Adrenal gland (tissue), 19 donors: ENCODE measurements at regions of chr1 and their contacts with region 1.

Region 1: GRCh38 chr1:165914136-165914798 is 86.9 kb downstream of the UCK2 start:
- DNase-seq: peak; percentile 60 to 90 (median 69)
- H3K4me3 ChIP-seq: no peak overlapping the region
- H3K27ac ChIP-seq: no peak overlapping the region
- H3K4me1 ChIP-seq: no peaks in the 10 kb centered on the region
- H3K27me3 ChIP-seq: no peaks in the 10 kb centered on the region
- CTCF ChIP-seq: peak; percentile 72 to 96 (median 94)
- POLR2A ChIP-seq: no peak

Region 2: GRCh38 chr1:165392634-165393571 is 521.4 kb before region 1 on chr1:
- intact Hi-C with region 1: loop called (anchors 10 kb)
- DNase-seq: peak; percentile 75 to 86 (median 76)
- H3K4me3 ChIP-seq: no peak overlapping the region
- H3K27ac ChIP-seq: no peak overlapping the region
- H3K4me1 ChIP-seq: peaks cover 0 to 5% of the 10 kb centered on the region in 2 donors
- H3K27me3 ChIP-seq: peaks cover 11% of the 10 kb centered on the region
- CTCF ChIP-seq: peak; percentile 81 to 96 (median 91)
- POLR2A ChIP-seq: no peak

Region 3: GRCh38 chr1:165717918-165718515 is 196.2 kb before region 1 on chr1:
- intact Hi-C with region 1: loop called (anchors 2 to 5 kb)
- DNase-seq: peak; percentile 36 to 68 (median 51)
- H3K4me3 ChIP-seq: no peak overlapping the region
- H3K27ac ChIP-seq: no peak overlapping the region
- H3K4me1 ChIP-seq: no peaks in the 10 kb centered on the region
- H3K27me3 ChIP-seq: no peaks in the 10 kb centered on the region
- CTCF ChIP-seq: peak; percentile 36 to 79 (median 64)
- POLR2A ChIP-seq: no peak

Region 4: GRCh38 chr1:165827268-165828102 is 86.8 kb before region 1 on chr1 and contains the start of gene UCK2:
- intact Hi-C with region 1: loop called in 1 of 2 experiments (anchors 10 kb)
- DNase-seq: peak; percentile 77 to 87 (median 84)
- H3K4me3 ChIP-seq: peak within 1 kb of the TSS; percentile 49 to 91 (median 75)
- H3K27ac ChIP-seq: peak within 1 kb of the TSS; percentile 35 to 91 (median 78)
- H3K4me1 ChIP-seq: peaks cover 10 to 12% of the 10 kb centered on the region in 2 donors
- H3K27me3 ChIP-seq: no peaks in the 10 kb centered on the region
- CTCF ChIP-seq: peak in 4 of 6 experiments; percentile 8 to 34 (median 10)
- POLR2A ChIP-seq: peak; percentile 15 to 77
- total RNA-seq, gene UCK2: 5.4 to 22.7 (median 14.3) TPM

Region 5: DNA sequence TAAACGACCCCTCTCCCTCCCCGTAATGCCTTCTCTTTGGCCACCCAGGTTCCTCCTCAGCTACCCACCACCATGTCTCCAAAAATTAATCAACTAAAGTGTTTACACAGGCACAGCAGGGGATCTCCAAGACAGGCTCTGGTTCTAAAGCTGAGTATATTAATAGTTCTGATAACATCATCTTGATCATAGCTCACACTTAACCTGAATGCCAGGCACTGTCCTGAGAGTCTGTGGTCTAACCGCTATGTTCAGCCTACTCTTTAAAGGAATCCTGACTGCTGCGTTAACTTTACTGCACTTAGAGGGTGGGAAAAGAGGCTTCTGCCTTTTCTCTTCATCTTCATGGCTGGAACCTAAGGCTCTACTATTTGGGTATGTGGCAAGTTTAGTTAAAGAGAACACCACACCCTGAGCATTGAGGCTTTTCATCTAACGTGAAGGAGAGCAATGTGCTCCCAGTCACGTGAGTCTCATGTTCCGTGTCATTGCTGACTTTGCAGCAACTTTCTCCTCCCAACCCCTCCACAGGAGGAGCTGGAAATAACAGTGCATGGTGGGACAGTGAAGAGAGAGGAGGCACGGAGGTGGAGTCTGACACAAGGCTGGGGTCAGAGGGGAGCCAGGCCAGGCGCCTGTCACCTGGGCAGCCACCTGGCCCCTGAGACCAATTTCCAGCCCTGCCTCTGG is 166.2 kb after region 1 on chr1:
- intact Hi-C with region 1: no loop called
- DNase-seq: no peak
- H3K4me3 ChIP-seq: no peak overlapping the region
- H3K27ac ChIP-seq: peak overlapping the region in 1 of 5 donors; percentile 34
- H3K4me1 ChIP-seq: no peaks in the 10 kb centered on the region
- H3K27me3 ChIP-seq: no peaks in the 10 kb centered on the region
- CTCF ChIP-seq: no peak
- POLR2A ChIP-seq: no peak